G401 (cell line): ENCODE measurements at regions of chr2 and their contacts with region 1.

Region 1: DNA sequence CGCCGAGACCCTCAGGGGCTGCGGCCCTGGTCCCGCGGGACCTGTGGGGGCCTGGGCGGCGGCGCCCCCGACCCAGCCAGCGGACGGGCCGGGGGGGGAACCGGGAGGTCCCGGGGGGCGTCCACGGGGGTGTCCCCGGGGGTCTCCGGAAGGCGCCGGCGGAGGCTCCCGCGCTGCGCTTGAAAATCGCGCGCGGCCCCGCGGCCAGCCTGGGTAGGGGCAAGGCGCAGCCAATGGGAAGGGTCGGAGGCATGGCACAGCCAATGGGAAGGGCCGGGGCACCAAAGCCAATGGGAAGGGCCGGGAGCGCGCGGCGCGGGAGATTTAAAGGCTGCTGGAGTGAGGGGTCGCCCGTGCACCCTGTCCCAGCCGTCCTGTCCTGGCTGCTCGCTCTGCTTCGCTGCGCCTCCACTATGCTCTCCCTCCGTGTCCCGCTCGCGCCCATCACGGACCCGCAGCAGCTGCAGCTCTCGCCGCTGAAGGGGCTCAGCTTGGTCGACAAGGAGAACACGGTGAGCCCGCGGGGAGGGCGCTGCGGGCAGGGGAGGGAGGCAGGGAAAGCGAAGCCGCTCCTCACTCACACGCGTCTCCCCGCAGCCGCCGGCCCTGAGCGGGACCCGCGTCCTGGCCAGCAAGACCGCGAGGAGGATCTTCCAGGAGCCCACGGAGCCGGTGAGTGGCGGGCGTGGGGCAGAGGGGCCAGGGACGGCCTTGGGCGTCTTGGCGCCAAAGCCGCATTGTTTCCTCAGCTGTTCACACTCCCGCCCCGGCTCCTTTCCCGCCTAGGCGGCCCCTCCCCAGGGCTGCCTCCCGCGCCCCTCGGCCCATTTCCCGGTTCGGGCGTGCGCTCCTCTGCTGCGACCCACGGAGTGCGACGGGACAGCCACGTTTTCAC is at the start of gene RRM2:
- DNase-seq: peak; percentile 89
- total RNA-seq, gene RRM2: 17.8 and 21.9 TPM in 2 replicates

Region 2: GRCh38 chr2:10448208-10448645 is 325.6 kb after region 1 on chr2 and contains the start of gene ODC1:
- in situ Hi-C with region 1: loop called (anchors 25 kb)
- DNase-seq: peak; percentile 85
- total RNA-seq, gene ODC1: 382 and 511 TPM in 2 replicates